Activated naive CD4-positive, alpha-beta T cell treated with anti-CD3 and anti-CD28 coated beads, Interleukin-2, amount 10 ng/mL, durations not matched to agents 7 days and 5 days (primary cell): ENCODE measurements at regions of chr10 and their contacts with region 1.

Region 1: DNA sequence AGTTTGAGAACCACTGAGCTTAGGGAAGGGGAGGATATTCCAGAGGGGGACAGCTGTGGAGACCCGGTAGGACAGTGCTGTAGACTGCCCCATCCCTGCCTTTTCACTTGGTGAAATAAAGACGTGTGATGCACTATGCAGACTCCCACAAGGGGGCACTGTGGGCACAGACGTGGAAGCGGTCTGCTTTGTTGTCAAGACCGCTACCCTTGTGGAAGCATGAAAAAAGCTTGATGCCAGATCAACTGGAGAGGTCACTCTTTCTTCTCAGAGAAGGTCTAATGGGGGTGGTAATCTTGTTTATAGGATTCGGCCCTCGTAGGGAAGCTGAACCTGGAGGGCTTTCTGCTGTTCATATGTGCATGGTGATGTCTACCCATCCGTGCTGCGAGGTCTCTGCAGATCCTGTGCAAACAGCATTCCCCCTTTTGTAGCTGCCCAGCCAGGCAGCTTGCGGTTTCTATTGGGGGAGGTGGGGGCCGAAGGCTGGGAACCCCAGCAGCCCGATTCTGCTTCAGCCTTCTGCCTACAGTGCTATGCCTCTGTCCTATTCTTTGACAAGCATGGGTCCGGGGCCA is 13.7 kb downstream of the RPS24 start:
- DNase-seq: peak; percentile 90
- H3K4me3 Mint-ChIP-seq: no peak overlapping the region
- H3K27ac Mint-ChIP-seq: no peak overlapping the region
- H3K4me1 Mint-ChIP-seq: peaks cover 17% of the 10 kb centered on the region
- H3K27me3 Mint-ChIP-seq: no peaks in the 10 kb centered on the region

Region 2: DNA sequence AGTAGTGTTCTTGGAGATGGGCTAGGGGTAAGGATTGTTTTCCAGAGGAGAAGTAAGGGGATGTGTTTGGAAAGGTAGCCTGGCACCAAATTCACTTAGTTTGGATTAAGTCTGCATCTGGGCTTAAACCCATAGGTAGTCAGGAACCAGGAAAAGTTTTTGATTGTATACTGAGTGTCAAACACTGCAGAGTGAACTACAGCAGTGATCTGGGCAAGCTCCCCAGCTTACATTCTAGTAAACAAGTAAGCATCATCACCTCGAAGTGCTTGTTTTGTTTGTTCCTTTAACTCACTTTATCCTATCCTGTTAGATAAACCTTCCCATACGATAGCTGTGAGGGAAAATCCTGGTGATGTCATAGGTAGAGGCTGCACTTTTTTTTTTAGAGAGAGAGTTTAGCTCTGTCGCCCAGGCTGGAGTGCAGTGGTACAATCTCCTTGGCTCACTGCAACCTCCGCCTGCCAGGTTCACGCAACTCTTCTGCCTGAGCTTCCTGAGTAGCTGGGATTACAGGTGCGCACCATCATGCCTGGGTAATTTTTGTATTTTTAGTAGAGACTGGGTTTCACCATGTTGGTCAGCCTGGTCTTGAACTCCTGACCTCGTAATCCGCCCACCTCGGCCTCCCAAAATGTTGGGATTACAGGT is 11.3 kb before region 1 on chr10:
- CTCF ChIA-PET with region 1: interaction called, 15 read pairs
- DNase-seq: no peak
- H3K4me3 Mint-ChIP-seq: peak overlapping the region; percentile 82
- H3K27ac Mint-ChIP-seq: peak overlapping the region; percentile 5
- H3K4me1 Mint-ChIP-seq: peaks cover 57% of the 10 kb centered on the region
- H3K27me3 Mint-ChIP-seq: no peaks in the 10 kb centered on the region

Region 3: GRCh38 chr10:78657163-78657861 is 609.9 kb after region 1 on chr10:
- CTCF ChIA-PET with region 1: interaction called, 33 read pairs
- DNase-seq: peak; percentile 82
- H3K4me3 Mint-ChIP-seq: no peak overlapping the region
- H3K27ac Mint-ChIP-seq: no peak overlapping the region
- H3K4me1 Mint-ChIP-seq: no peaks in the 10 kb centered on the region
- H3K27me3 Mint-ChIP-seq: peaks cover 18% of the 10 kb centered on the region